ENCODE measurements at regions of chr11 and their contacts with region 1.

Region 1: DNA sequence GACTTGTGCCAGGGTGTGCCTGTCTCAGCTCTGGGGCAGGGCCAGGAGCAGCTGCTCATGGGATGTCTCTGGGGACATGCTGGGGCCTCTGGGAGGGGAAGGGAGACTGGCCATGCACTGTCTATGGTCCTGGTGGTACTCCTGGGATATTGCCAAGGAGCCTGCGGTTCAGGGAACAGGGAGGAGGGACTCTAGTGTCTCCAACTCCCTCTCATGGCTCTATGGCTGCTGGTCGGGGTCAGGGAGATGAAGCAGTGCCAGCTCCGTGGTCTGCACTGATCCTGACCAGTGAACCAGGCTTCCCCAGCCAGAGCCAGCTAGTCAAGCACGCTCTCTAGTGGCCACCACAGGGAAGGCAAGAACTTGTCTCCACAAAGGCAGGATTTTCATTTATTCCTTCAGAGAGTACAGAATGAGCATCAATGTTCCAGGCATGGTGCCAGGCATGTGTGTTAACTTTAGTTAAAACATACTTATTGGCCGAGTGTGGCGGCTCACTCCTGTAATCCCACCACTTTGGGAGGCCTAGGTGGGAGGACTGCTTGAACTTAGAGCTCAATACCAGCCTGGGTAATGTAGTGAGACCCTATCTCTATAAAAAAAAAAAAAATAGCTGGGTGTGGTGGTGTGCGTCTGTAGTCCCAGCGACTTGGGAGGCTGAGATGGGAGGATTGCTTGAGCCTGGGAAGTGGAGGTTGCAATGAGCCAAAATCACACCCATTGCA is 2.5 kb upstream of the BEST1 start:
- DNase-seq: peak; percentile 91
- H3K4me3 ChIP-seq: no peak overlapping the region
- H3K27ac ChIP-seq: no peak overlapping the region
- H3K4me1 ChIP-seq: peaks cover 5 to 11% of the 10 kb centered on the region in 2 donors
- H3K27me3 ChIP-seq: no peaks in the 10 kb centered on the region
- CTCF ChIP-seq: peak; percentile 70 to 94 (median 89)
- POLR2A ChIP-seq: no peak

Region 2: DNA sequence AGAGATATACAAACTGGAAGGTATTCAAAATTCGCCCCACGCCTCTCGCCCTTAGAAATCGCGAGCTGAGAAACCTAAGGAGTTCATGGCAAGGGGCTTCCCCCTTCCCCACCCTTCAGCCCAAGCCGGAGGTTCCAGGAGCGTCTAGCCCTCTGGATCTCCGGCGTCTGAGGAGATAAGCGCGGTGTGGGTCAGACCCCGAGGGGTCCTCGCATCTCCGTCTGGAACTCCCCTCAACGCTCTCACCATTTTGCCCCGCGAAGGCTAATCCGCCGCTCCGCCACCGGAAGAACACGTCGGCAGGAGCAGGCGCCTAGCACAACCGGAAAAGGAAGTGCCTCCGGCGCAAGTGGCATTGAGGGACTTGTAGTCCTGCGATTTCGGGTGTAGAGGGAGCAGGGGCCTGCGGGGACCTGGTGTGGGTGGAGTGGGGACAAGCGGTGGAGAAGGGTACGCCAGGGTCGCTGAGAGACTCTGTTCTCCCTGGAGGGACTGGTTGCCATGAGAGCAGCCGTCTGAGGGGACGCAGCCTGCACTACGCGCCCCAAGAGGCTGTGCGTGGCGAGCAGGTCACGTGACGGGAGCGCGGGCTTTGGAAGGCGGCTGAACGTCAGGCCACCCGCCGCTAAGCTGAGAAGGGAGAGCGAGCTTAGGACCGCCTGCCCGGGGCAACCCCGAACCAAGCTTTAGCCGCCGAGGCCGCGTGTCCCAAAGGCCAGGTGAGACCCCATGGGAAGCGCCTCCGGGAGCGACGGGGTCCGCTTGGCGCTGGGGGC is 155.2 kb before region 1 on chr11 and contains the starts of genes FEN1 and TMEM258:
- intact Hi-C with region 1: loop called (anchors 5 kb)
- DNase-seq: peak; percentile 89 to 90
- H3K4me3 ChIP-seq: peak within 1 kb of the TSS; percentile 68 to 83 (median 75)
- H3K27ac ChIP-seq: peak within 1 kb of the TSS; percentile 91 to 98 (median 96)
- H3K4me1 ChIP-seq: peaks cover 6 to 22% of the 10 kb centered on the region in 2 donors
- H3K27me3 ChIP-seq: no peaks in the 10 kb centered on the region
- CTCF ChIP-seq: peak in 2 of 6 experiments; percentile 24 to 40
- POLR2A ChIP-seq: peak in 1 of 2 donors; percentile 68
- total RNA-seq, gene FEN1: 4.1 to 6.3 (median 5.2) TPM
- total RNA-seq, gene TMEM258: 28.0 to 57.9 (median 48.1) TPM

Region 3: DNA sequence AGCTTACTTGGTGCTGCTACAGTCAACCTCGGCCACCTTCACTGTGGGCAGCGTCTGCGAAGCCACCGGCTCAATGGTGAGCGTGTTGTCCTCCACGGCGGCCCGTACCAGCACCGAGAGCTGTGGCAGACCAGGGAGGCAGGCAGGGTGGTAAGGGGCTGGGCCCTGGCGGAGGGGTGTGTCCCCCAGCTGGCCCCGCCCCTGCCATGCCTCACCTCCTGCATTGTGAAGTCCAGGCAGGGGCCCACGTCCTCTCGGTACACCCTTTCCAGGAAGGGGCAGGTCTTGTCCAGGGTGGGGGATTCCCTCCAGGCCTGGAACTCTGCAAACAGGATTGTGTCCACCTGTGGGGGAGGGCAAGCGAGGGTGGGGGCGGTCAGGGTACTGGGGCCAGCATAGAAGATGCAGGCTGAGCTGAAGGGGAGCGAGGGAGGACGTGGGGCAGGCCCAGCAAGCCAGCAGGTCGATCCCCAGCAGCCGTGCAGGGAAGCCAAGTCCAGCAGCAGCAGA is 43.1 kb before region 1 on chr11:
- intact Hi-C with region 1: loop called (anchors 5 kb)
- DNase-seq: peak; percentile 56 to 57
- H3K4me3 ChIP-seq: no peak overlapping the region
- H3K27ac ChIP-seq: no peak overlapping the region
- H3K4me1 ChIP-seq: peaks cover 4 to 14% of the 10 kb centered on the region in 2 donors
- H3K27me3 ChIP-seq: no peaks in the 10 kb centered on the region
- CTCF ChIP-seq: no peak
- POLR2A ChIP-seq: no peak